ENCODE measurements at regions of chr19 and their contacts with region 1.

Region 1: DNA sequence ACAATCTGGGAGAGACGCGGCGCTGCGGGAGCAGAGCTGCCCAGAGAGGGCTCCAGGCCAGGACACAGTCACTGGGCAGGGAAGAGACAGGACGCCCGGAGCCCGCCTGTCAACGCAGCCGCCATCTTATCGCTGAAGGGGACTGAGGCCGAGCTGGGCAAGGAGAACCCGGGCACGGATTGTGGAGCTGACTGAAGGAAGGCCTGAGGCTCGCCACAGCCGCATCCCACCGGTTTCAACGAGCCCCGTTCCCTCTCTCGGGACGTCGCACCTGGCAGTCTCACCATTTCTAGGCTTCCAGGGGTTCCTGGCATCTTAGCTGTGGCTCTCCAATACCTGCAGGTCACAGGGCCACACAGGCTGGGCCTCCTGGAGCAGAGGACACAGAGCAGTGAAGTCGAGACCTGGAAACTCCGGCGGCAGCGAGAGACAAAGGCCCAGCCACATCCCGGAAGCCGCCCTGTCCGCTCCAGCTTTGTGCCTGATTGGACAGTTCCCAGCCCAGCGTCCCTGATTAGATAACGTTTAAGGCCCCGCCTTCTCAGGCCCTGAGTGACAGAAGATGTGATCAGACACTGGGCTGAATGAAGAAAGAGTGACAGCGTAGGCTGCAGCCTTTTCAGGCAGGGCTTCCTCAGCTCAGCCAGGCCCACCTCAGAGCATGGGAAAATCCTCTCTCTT is at the start of gene ZNF91:
- DNase-seq: peak; percentile 95 to 97
- ATAC-seq: peak; percentile 97
- H3K4me3 ChIP-seq: peak within 1 kb of the TSS; percentile 42 to 77
- H3K27ac ChIP-seq: peak within 1 kb of the TSS; percentile 51 to 87
- H3K4me1 ChIP-seq: peaks cover 1 to 4% of the 10 kb centered on the region in 2 donors
- H3K27me3 ChIP-seq: no peaks in the 10 kb centered on the region
- total RNA-seq, gene ZNF91: 52.4 to 63.6 TPM

Region 2: GRCh38 chr19:23273590-23274413 is 121.4 kb before region 1 on chr19:
- intact Hi-C with region 1: loop called (anchors 5 to 10 kb)
- DNase-seq: peak; percentile 94 to 97
- ATAC-seq: peak; percentile 98
- H3K4me3 ChIP-seq: peak overlapping the region; percentile 80 to 85
- H3K27ac ChIP-seq: peak overlapping the region in 1 of 2 donors; percentile 87
- H3K4me1 ChIP-seq: no peaks in the 10 kb centered on the region
- H3K27me3 ChIP-seq: no peaks in the 10 kb centered on the region